Activated naive CD4-positive, alpha-beta T cell treated with anti-CD3 and anti-CD28 coated beads for 36 hours (primary cell): ENCODE measurements at regions of chr1 and their contacts with region 1.

Region 1: GRCh38 chr1:15028102-15028501 is 125.4 kb upstream of the TMEM51 start:
- DNase-seq: no peak
- H3K4me3 Mint-ChIP-seq: no peak overlapping the region
- H3K27ac Mint-ChIP-seq: no peak overlapping the region
- H3K4me1 Mint-ChIP-seq: no peaks in the 10 kb centered on the region
- H3K27me3 Mint-ChIP-seq: no peaks in the 10 kb centered on the region

Region 2: DNA sequence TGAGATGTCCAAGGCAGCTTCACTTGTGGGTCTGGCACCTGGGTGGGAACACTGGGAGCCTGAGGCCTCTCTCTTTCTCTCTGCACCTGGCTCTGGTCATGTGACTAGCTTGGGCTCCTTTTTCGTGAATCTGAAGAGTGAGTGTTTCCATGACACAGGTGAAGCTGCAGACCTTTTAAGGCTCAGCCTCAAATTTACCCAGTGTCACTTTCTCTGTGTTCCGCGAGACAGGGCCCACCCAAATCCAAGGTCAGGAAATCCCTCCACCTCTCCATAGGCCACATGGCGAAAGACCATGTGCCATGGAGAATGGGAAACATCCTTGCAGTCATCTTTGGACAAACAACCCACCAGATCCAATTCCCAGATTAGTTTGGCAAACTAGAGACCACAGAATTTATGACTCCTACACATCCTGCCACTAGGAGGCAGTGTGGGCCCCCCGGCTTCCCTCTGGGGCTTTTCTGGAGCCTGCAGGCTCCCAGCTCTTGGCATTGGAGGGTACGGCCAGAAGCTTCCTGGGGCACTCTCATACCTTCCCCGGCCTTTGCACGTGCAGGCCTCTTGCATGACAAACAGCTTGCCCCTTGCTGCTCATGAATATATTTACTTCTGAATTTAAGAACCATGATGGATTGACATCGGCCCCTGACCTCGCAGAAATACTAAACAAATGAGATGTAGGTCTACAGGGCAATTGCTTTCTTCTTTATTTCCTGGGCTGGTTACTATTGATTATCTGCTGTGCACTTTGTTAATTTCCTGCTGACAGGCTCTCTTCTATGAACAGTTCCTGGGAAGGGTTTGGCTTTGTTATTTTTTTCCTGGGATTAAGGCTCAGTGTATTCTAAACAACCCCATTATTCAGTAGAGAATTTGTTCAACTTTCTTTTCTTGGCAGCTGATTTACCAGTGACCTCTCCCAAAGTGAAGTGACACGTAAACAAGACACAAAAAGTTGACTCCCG is 248.9 kb before region 1 on chr1:
- CTCF ChIA-PET with region 1: interaction called, 3 read pairs
- intact Hi-C with region 1: loop called (anchors 5 kb)
- DNase-seq: peak; percentile 53
- H3K4me3 Mint-ChIP-seq: no peak overlapping the region
- H3K27ac Mint-ChIP-seq: no peak overlapping the region
- H3K4me1 Mint-ChIP-seq: peaks cover 2% of the 10 kb centered on the region
- H3K27me3 Mint-ChIP-seq: peaks cover 6% of the 10 kb centered on the region

Region 3: GRCh38 chr1:14924455-14925331 is 103.4 kb before region 1 on chr1:
- CTCF ChIA-PET with region 1: no interaction called
- intact Hi-C with region 1: loop called (anchors 5 kb)
- DNase-seq: peak; percentile 39
- H3K4me3 Mint-ChIP-seq: peak overlapping the region; percentile 45
- H3K27ac Mint-ChIP-seq: no peak overlapping the region
- H3K4me1 Mint-ChIP-seq: peaks cover 2% of the 10 kb centered on the region
- H3K27me3 Mint-ChIP-seq: peaks cover 34% of the 10 kb centered on the region